ENCODE measurements at regions of chr7 and their contacts with region 1.

Region 1: DNA sequence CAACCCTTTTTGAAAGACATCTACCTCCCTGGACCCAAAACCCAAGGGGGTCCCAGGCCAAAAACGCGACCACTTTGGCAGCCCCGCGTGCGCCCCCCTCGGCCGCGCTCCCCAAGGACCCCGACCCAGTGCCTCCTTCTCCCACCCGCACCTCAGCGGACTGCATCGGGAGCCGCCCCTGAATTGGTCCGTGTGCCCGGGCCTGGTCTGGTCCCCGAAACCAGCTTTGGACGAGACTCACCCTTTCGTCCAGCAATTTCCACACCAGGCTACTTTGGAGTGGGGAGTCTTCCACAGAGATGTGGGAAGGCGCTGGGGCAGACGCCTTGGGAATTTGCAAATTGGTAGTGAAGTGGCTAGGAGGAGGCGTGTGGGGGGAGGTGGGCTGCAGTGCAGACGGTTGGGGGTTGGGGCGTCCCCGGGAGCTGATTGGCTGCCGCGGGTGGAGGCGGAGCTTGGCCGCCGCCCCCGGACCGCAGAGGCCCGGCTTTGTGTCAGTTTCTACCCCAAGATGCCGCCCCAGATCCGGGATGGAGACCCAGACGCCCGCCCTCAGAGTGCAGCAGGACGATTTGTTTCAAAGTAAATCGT is 16.9 kb downstream of the TCAF1 start:
- DNase-seq: peak; percentile 87
- ATAC-seq: peak; percentile 87
- H3K4me3 Mint-ChIP-seq: peak overlapping the region; percentile 87
- H3K27ac Mint-ChIP-seq: no peak overlapping the region
- H3K4me1 Mint-ChIP-seq: peaks cover 33% of the 10 kb centered on the region
- H3K27me3 Mint-ChIP-seq: peaks cover 20% of the 10 kb centered on the region
- CTCF ChIP-seq: no peak

Region 2: GRCh38 chr7:143901668-143902331 is 16.7 kb after region 1 on chr7 and contains the start of gene TCAF1:
- CTCF ChIA-PET with region 1: interaction called, 19 read pairs
- POLR2A ChIA-PET with region 1: interaction called, 46 read pairs
- DNase-seq: peak; percentile 95
- ATAC-seq: peak; percentile 89
- H3K4me3 Mint-ChIP-seq: peak within 1 kb of the TSS; percentile 95
- H3K27ac Mint-ChIP-seq: peak within 1 kb of the TSS; percentile 99
- H3K4me1 Mint-ChIP-seq: peaks cover 70% of the 10 kb centered on the region
- H3K27me3 Mint-ChIP-seq: peaks cover 4% of the 10 kb centered on the region; the same call in 1 of the 2 replicates
- CTCF ChIP-seq: no peak
- total RNA-seq, gene TCAF1: 39.8 to 52.7 TPM (median 42.0 TPM) in 3 replicates